Left cardiac atrium (tissue), 4 donors: ENCODE measurements at regions of chr4 and their contacts with region 1.

Region 1: GRCh38 chr4:7802093-7802726 is 137.5 kb downstream of the AFAP1 start:
- DNase-seq: peak; percentile 84
- ATAC-seq: peak; percentile 43 to 49

Region 2: DNA sequence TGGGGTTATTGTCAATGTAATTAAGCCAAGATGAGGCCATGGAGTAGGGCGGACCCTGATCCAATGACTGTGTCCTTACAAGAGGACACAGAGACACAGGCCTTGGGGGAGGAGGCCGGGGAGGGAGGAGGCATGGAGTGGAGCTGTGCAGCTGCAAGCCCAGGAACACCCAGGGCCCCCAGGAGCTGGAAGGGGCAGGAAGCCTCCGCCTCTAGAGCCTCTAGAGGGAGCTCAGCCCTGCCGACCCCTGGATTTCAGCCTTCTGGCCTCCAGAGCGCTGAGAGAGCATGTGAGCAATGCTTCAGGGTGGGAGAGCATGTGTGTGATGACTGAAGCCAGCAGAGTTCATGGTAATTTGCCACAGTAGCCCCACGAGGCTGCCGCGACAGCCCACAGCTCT is 97.1 kb before region 1 on chr4:
- intact Hi-C with region 1: no loop called
- DNase-seq: no peak
- ATAC-seq: peak; percentile 8 to 53

Region 3: DNA sequence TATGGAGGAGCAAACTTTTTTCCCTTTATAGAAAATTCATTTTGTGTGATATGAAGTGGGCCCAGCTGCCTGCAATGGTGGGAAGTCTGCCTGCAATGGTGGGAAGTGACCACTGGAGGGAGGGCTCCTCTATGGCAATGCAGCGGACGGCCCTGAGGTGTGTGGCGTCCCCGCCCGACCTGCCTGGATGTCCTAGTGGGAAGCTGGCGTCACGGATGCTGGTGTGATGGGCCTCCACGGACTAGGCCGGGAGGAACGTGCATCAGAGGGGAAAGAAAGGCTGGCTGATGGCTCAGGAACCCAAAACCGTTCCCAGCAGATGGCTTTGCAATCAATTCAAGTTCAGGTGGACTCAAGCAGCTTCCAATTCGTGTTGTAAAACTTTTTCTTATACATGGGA is 40.5 kb before region 1 on chr4:
- intact Hi-C with region 1: loop called (anchors 2 to 5 kb)
- DNase-seq: peak; percentile 89
- ATAC-seq: peak; percentile 78 to 85

Region 4: GRCh38 chr4:7843831-7844593 is 41.8 kb after region 1 on chr4:
- intact Hi-C with region 1: loop called in 1 of 2 experiments (anchors 5 kb)
- DNase-seq: peak; percentile 84
- ATAC-seq: peak; percentile 59 to 61

Region 5: DNA sequence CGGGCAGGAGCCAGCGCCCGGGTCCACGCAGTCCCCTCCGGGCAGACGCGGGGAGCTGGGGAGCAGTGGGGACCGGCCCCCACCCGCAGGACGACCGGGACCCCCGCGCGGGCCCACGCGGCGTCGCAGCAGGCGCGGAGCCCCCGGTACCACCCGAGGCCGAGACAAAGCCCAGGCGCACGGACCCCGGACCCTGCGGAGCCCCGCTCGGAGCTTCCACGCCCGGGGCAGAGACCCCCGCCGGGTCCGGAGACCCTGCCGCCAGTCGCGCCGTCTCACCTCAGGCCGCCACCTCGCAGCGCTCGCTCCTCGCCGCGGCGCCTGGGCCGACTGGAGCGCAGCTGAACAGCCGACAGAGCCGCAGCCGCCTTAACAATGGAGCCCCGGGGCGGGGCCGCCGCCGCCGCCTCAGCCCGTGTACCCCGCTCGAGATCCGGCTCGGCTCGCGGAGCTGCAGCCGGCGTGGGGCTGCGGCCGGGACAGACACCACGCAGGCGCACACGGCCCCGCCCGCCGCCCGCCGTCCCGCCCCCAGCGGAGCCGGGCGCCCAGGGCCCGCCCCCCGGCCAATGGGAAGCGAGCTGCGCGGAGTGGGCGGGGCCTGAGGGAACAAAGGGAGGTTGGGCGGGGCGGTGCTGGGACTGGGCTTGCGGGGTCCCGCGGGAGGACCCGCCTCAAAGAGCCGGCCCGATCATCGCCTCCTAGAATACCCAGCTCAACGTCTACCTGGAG is 137.3 kb after region 1 on chr4 and contains the start of gene AFAP1:
- intact Hi-C with region 1: loop called in 1 of 2 experiments (anchors 5 kb)
- DNase-seq: peak; percentile 92
- ATAC-seq: peak; percentile 94 to 96
- total RNA-seq, gene AFAP1: 19.6 to 33.3 TPM

Region 6: DNA sequence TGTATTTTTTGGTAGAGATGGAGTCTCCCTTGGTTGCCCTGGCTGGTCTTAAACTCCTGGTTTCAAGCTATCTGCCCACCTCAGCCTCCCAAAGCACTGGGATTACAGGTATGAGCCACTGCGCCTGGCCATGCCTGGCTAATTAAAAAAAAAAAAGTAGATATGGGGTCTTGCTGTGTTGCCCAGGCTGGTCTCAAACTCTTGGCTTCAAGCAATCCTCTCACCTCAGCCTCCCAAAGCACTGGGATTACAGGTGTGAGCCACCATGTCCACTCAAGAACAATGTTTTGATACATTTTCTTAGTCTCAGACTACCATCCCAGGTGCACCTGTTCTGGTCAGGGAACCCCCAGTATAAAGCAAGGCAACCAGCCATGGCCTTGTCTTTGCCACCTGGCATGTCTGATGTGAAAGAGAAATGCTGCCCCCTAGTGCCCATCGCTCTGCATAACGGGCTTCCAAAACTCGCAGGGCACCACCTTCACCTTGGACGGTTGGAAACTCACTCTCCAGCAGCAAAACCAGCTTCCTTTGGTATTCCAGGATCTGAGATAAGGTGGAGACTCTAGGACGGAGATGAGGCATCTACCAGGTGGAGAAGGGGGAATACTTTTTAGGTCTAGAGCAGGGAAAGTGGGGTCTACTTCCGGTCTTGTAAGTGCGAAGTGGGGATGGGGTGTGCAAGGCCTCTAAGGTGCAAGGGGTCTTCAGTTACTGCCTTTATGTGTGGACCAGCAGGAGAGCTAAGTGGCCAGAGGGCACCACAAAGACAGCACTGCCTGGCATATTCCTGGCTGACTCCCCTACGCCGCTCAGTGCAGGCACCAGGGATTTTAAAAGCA is 185.2 kb after region 1 on chr4:
- intact Hi-C with region 1: loop called (anchors 1 to 2 kb)
- DNase-seq: peak; percentile 76
- ATAC-seq: peak; percentile 68 to 81